ENCODE measurements at regions of chr4 and their contacts with region 1.

Region 1: DNA sequence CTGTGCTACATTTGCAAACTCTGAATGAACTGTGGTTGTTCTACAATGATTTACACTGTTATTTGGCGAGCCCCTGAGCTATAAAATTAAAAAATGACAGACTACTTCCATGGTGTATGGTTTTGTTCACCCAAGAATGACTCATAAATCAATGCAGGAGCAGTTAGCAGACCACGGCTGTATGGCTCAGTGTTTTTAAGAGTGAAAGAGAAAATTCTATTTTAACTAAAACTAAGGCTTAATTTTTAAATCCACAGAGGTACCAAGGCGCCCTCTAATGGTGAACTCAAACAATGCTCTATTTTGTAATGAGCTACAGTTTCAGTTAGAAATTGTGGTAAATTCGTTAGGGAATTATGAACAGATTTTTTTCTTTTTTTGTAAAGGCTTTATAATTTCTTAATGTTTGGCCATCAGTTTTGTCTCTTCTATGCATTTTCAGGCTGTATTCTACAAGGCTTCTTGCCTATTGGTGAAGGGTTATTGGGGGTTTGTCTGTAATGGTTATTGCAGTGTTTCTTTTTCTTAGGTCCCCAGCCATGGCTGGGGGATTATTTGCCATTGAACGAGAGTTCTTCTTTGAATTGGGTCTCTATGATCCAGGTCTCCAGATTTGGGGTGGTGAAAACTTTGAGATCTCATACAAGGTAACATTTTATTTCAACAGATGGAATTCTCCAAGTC is 32.5 kb downstream of the HMGB2 start:
- DNase-seq: no peak
- ATAC-seq: no peak
- H3K4me3 ChIP-seq: no peak overlapping the region
- H3K27ac ChIP-seq: no peak overlapping the region
- H3K4me1 ChIP-seq: no peaks in the 10 kb centered on the region
- H3K27me3 ChIP-seq: no peaks in the 10 kb centered on the region
- CTCF ChIP-seq: peak in 4 of 5 experiments; percentile 15 to 75 (median 54)
- POLR2A ChIP-seq: no peak

Region 2: GRCh38 chr4:173013232-173013930 is 288.3 kb before region 1 on chr4:
- in situ Hi-C with region 1: no loop called
- intact Hi-C with region 1: loop called (anchors 1 kb)
- DNase-seq: no peak
- ATAC-seq: peak; percentile 50 to 61
- H3K4me3 ChIP-seq: no peak overlapping the region
- H3K27ac ChIP-seq: no peak overlapping the region
- H3K4me1 ChIP-seq: no peaks in the 10 kb centered on the region
- H3K27me3 ChIP-seq: no peaks in the 10 kb centered on the region
- CTCF ChIP-seq: peak; percentile 29 to 81 (median 39)
- POLR2A ChIP-seq: no peak

Region 3: GRCh38 chr4:174135936-174136406 is 834.3 kb after region 1 on chr4:
- in situ Hi-C with region 1: loop called in 1 of 4 experiments (anchors 25 kb)
- intact Hi-C with region 1: no loop called
- DNase-seq: no peak
- ATAC-seq: no peak
- H3K4me3 ChIP-seq: peak overlapping the region; percentile 2 to 28 (median 20)
- H3K27ac ChIP-seq: no peak overlapping the region
- H3K4me1 ChIP-seq: peaks cover 0 to 6% of the 10 kb centered on the region in 2 donors
- H3K27me3 ChIP-seq: no peaks in the 10 kb centered on the region
- CTCF ChIP-seq: no peak
- POLR2A ChIP-seq: no peak

Measured in gastrocnemius medialis (tissue), 4 donors.